ENCODE measurements at regions of chr10 and their contacts with region 1.

Region 1: DNA sequence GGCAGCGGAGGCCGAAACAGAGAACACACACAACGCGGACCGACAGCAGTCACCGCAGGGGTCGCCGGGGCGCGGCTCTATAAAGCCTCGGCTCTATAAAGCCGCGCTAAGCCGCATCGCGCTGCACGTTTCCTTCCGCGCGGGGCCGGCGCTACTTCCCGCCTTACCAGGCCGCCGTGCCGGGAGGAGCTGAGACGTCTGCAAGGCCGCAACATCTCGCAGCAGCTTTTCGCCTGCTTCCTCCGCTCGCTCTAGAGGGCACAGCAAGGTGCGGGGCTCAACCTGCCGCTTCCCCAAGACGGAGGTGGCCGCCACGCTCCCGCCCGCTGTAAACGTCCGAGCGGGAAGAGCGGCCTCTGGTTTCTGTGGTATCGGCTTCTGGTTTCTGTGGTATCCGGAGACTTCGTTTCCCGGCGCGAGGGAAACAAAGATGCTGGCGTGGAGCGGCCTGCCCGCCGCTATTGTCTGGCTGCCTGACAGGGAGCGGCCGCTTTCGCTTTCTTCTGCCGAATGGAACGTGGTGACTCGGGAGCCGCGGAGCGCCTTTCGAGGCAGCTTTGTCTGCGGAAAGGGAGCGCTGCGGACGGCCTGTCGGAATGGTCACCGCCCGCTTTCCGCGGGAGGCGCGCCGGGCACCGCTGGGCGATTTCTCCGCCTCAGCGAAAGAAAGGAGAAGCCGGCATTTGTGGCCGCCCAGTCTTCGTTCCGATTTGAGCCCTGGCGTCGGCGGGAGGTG is 91.8 kb downstream of the SPAG6 start:
- H3K4me3 Mint-ChIP-seq: peak overlapping the region; percentile 88
- H3K27ac Mint-ChIP-seq: peak overlapping the region; percentile 99
- H3K4me1 Mint-ChIP-seq: peaks cover 56% of the 10 kb centered on the region
- H3K27me3 Mint-ChIP-seq: peaks cover 28% of the 10 kb centered on the region

Region 2: DNA sequence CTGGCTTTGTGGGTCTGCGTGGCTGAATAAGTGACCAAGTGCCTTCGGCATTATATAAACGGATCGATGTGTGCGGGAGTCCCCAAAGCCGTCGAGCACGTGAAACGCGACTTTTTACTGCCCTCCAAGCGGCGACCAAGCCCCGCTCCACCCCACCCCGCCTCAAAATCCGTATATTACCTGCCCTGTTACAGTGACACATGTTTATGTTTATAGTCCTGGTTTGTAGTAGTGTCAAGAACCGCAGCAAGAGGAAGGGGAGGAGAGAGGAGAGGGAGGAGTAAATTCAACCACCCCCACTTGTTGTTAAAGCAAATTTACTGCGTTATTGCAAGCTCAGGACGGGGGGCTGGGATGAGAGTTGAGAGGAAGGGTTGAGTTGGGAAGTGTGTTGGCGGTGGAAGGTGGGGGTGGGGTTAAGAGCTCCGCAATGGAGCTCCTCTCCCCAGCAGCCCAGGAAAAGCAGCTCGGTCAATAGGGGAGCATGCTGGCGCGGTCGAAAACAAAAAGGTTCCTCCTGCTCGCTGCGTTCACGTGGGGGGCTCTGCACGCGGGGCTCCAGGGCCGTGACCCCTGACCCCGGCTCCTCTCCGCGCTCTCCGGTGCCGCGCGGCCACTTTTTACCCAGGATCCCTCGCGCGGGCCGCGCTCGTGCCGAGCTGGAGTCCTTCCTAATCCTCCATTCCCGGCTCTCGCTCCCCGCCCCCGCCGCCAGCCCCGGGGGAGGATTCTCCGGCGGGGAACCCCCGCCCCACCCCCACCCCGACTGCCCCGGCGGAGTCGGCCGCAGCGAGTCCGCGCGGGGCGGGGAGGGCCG is 911.5 kb before region 1 on chr10 and contains the start of gene SKIDA1:
- intact Hi-C with region 1: loop called (anchors 10 kb)
- H3K4me3 Mint-ChIP-seq: peak within 1 kb of the TSS; percentile 88
- H3K27ac Mint-ChIP-seq: peak within 1 kb of the TSS; percentile 97
- H3K4me1 Mint-ChIP-seq: peaks cover 30% of the 10 kb centered on the region
- H3K27me3 Mint-ChIP-seq: peaks cover 10% of the 10 kb centered on the region

Region 3: GRCh38 chr10:22228943-22229801 is 207.9 kb before region 1 on chr10:
- intact Hi-C with region 1: loop called (anchors 5 kb)
- H3K4me3 Mint-ChIP-seq: peak overlapping the region; percentile 76
- H3K27ac Mint-ChIP-seq: peak overlapping the region; percentile 86
- H3K4me1 Mint-ChIP-seq: peaks cover 10% of the 10 kb centered on the region
- H3K27me3 Mint-ChIP-seq: peaks cover 2% of the 10 kb centered on the region

Region 4: DNA sequence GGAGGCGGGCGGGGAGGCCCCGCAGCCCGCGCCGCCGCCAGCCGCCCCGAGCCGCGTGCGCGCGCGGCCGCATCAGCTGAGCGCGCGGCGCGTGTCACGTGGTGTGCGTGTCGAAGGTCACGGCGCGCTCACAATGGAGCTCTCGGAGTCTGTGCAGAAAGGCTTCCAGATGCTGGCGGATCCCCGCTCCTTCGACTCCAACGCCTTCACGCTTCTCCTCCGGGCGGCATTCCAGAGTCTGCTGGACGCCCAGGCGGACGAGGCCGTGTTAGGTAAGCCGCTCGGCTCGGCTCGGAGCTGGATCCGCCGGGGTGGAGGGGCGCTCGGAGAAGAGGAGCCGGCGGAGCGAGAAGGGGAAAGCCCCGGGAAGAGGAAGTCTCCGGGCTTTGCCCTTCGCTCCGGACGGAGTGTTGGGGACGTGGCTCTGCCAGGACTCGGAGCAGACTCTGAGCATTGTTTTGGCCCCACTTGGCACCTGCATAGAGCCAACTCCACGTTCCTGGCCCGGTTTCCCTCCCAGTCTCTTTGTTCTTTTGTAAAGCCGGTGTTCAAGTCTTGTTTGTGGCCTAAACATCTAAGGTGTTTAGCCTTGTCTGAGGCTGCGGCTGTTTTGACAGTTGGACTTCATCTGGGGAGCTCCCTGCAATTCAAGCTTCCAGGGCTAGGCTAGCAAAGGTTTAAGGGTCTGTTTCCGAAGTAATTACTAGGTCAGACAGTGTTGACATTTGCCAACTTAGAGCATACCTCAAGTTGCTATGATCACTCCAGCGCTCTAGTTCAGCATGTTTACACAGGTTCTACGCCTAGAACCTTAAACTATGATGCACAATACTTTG is 120.5 kb before region 1 on chr10 and contains the start of gene COMMD3:
- intact Hi-C with region 1: loop called (anchors 5 kb)
- H3K4me3 Mint-ChIP-seq: peak within 1 kb of the TSS; percentile 94
- H3K27ac Mint-ChIP-seq: peak within 1 kb of the TSS; percentile 95
- H3K4me1 Mint-ChIP-seq: peaks cover 6% of the 10 kb centered on the region
- H3K27me3 Mint-ChIP-seq: no peaks in the 10 kb centered on the region

Region 5: DNA sequence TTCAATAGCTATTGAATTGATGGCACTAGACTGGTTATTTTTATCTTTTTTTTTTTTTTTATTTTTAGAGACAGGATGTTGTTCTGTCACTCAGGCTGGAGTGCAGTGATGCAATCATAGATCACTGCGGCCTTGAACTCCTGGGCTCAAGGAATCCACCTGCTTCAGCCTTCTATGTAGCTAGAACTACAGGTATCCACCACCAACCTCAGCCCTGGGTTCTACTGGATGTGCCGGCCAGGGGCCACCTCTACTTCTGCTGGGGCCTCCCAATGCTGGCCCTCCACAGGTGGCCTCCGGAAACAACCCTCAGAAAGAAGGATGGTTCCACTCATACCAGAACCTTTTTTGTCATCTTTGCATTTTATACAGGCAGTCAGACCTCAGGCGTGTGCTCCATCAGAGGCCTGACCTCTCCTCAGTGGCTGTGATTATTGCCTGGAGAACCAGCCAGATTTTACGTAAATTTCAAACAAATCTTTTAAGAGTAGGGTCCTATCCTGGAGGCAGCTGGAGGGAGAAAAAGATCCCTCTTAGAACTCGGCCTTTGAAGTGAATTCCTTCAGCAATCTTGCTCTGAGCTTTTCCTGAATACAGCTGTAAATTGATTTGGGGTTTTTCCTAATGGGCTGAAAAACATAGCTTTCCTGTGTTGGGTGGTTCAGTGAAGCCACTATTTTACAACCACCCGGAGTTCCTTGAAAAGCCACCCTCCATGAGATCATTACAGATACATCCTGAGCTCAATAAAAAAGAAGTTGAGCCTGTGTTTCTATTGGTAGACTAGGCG is 18.2 kb after region 1 on chr10:
- intact Hi-C with region 1: no loop called
- H3K4me3 Mint-ChIP-seq: no peak overlapping the region
- H3K27ac Mint-ChIP-seq: no peak overlapping the region
- H3K4me1 Mint-ChIP-seq: peaks cover 6% of the 10 kb centered on the region
- H3K27me3 Mint-ChIP-seq: peaks cover 2% of the 10 kb centered on the region

Region 6: DNA sequence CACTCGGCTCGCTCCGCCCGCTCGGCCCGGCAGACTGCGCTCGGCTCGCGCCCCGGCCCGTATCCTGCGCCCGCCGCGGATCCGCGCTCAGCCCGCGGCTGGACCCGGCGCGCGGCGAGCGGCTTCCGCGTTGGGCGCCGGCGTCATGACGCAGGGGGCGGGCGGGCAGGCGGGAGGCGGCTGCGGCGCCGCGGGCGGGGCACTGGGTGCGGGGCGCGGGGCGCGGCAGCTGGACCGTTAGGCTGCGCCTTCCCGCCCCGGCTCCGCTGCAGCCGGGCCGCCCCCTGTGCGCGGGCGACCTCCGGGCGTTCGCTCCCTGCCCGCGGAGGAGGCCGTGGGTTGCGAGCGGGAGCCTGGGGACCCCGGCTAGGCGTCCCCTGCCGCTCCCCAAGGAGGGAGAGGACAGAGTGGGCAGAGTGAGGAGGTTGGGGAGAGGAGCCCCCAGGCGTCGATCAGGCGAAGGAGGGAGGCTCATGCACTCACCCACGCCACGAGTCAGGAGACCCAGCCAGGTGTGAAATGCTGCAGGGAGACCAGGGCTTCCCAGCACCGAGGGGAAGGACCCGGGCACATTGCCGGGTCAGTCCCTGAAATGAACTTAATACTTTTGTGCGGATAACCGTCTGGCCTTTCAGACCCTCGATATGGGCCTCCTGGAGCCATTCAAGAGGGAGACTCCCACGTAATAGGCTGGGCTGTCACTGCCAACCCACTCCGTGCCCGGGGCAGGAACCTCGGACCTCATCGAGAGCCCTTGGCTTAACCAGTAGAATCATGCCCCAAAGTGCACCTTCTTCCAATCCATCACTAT is 277.6 kb after region 1 on chr10 and contains the start of gene PIP4K2A:
- intact Hi-C with region 1: loop called (anchors 10 kb)
- H3K4me3 Mint-ChIP-seq: peak within 1 kb of the TSS; percentile 91
- H3K27ac Mint-ChIP-seq: peak within 1 kb of the TSS; percentile 84
- H3K4me1 Mint-ChIP-seq: peaks cover 30% of the 10 kb centered on the region
- H3K27me3 Mint-ChIP-seq: peaks cover 6% of the 10 kb centered on the region

Region 7: DNA sequence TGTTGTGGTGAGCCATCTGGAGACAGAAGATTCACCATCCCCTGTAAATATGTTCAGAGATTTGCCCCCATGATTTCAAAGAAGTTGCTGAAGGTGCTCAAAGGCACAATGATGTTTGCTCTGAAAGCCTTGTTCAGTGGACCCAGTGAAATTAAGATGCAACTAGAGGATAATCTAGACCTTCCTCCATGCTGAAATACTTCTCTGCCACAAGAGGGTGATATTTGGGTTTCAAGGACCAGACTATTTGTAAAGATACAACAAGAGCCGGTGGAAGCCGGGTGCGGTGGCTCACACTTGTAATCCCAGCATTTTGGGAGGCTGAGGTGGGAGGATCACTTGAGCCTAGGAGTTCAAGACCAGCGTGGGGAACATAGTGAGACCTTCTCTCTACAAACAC is 644.8 kb after region 1 on chr10:
- intact Hi-C with region 1: no loop called
- H3K4me3 Mint-ChIP-seq: no peak overlapping the region
- H3K27ac Mint-ChIP-seq: no peak overlapping the region
- H3K4me1 Mint-ChIP-seq: no peaks in the 10 kb centered on the region
- H3K27me3 Mint-ChIP-seq: peaks cover 28% of the 10 kb centered on the region